Heart right ventricle (tissue), 16 donors: ENCODE measurements at regions of chr15 and their contacts with region 1.

Region 1: GRCh38 chr15:46059921-46060594 is 425.2 kb downstream of the SQOR start:
- DNase-seq: no peak
- ATAC-seq: peak in 5 of 8 donors; percentile 11 to 70 (median 34)
- H3K4me3 ChIP-seq: no peak overlapping the region
- H3K27ac ChIP-seq: no peak overlapping the region
- H3K4me1 ChIP-seq: peaks cover 0 to 16% (median 5%) of the 10 kb centered on the region in 9 donors
- H3K27me3 ChIP-seq: no peaks in the 10 kb centered on the region
- CTCF ChIP-seq: no peak

Region 2: DNA sequence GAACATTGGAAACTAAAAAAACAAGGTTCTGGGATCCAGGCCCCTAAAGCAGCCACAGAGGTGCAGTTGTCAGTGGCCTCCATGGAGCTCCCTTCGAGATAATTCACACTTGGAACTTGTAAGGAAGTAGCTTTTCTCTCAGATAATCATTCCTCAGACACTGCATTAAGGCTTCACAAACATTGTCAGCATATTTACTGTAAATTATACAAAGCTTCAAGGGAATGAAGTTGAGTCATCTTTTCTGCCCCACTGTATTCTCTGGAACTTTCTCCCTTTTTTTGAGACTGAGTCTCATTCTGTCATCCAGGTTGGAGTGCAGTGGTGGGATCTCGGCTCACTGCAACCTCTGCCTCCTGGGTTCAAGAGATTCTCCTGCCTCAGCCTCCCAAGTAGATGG is 465.7 kb before region 1 on chr15:
- intact Hi-C with region 1: no loop called
- DNase-seq: no peak
- ATAC-seq: no peak
- H3K4me3 ChIP-seq: no peak overlapping the region
- H3K27ac ChIP-seq: no peak overlapping the region
- H3K4me1 ChIP-seq: peaks cover under 1 to 31% (median 22%) of the 10 kb centered on the region in 9 donors
- H3K27me3 ChIP-seq: no peaks in the 10 kb centered on the region
- CTCF ChIP-seq: no peak

Region 3: GRCh38 chr15:45921376-45921775 is 138.7 kb before region 1 on chr15:
- intact Hi-C with region 1: no loop called
- DNase-seq: no peak
- ATAC-seq: no peak
- H3K4me3 ChIP-seq: no peak overlapping the region
- H3K27ac ChIP-seq: peak overlapping the region in 1 of 10 donors; percentile 2
- H3K4me1 ChIP-seq: peaks cover 0 to 35% (median 14%) of the 10 kb centered on the region in 9 donors
- H3K27me3 ChIP-seq: no peaks in the 10 kb centered on the region
- CTCF ChIP-seq: no peak

Region 4: DNA sequence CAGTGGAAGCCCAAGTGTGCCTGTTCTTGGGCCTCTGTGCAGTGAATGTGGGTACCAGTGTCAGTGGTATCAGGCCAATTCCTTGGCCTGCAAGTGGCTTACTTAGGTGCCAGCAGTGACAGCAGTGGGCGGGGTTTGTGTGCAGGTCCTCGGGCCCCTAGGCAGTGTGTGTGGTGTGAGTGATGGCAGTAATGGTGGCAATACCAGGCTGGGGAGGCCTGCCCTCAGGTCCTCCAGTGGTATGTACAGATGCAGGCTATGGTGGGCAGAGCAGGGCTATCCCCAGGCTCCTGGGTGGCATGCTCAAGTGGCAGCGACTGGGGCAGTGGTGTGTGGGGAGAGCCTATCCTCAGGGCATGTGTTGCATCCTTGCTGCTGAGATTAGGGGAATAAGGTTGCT is 45.5 kb before region 1 on chr15:
- intact Hi-C with region 1: loop called in 1 of 10 experiments (anchors 10 kb)
- DNase-seq: no peak
- ATAC-seq: no peak
- H3K4me3 ChIP-seq: no peak overlapping the region
- H3K27ac ChIP-seq: no peak overlapping the region
- H3K4me1 ChIP-seq: no peaks in the 10 kb centered on the region
- H3K27me3 ChIP-seq: no peaks in the 10 kb centered on the region
- CTCF ChIP-seq: no peak

Region 5: GRCh38 chr15:46111730-46112129 is 51.7 kb after region 1 on chr15:
- intact Hi-C with region 1: loop called in 1 of 10 experiments (anchors 10 kb)
- DNase-seq: no peak
- ATAC-seq: no peak
- H3K4me3 ChIP-seq: no peak overlapping the region
- H3K27ac ChIP-seq: no peak overlapping the region
- H3K4me1 ChIP-seq: no peaks in the 10 kb centered on the region
- H3K27me3 ChIP-seq: no peaks in the 10 kb centered on the region
- CTCF ChIP-seq: no peak